ENCODE measurements at regions of chr1 and their contacts with region 1.

Region 1: GRCh38 chr1:155989242-155990004 is 11.1 kb upstream of the ARHGEF2 start:
- DNase-seq: peak; percentile 82
- ATAC-seq: peak; percentile 84
- H3K4me3 Mint-ChIP-seq: no peak overlapping the region
- H3K27ac Mint-ChIP-seq: no peak overlapping the region
- H3K4me1 Mint-ChIP-seq: peaks cover 27% of the 10 kb centered on the region
- H3K27me3 Mint-ChIP-seq: no peaks in the 10 kb centered on the region; the same call in 1 of the 2 replicates
- CTCF ChIP-seq: peak; percentile 99

Region 2: GRCh38 chr1:155717041-155717440 is 272.4 kb before region 1 on chr1:
- CTCF ChIA-PET with region 1: no interaction called
- POLR2A ChIA-PET with region 1: no interaction called
- DNase-seq: no peak
- ATAC-seq: no peak
- H3K4me3 Mint-ChIP-seq: no peak overlapping the region
- H3K27ac Mint-ChIP-seq: no peak overlapping the region
- H3K4me1 Mint-ChIP-seq: no peaks in the 10 kb centered on the region
- H3K27me3 Mint-ChIP-seq: no peaks in the 10 kb centered on the region; the same call in 1 of the 2 replicates
- CTCF ChIP-seq: no peak

Region 3: GRCh38 chr1:155934097-155934935 is 55.1 kb before region 1 on chr1 and contains the start of gene KHDC4:
- CTCF ChIA-PET with region 1: interaction called, 85 read pairs
- POLR2A ChIA-PET with region 1: interaction called, 4 read pairs
- DNase-seq: peak; percentile 88
- ATAC-seq: peak; percentile 92
- H3K4me3 Mint-ChIP-seq: no peak within 1 kb of the TSS
- H3K27ac Mint-ChIP-seq: no peak within 1 kb of the TSS
- H3K4me1 Mint-ChIP-seq: peaks cover 20% of the 10 kb centered on the region
- H3K27me3 Mint-ChIP-seq: no peaks in the 10 kb centered on the region
- CTCF ChIP-seq: no peak
- total RNA-seq, gene KHDC4: 46.0 to 64.4 TPM (median 59.8 TPM) in 3 replicates

Region 4: GRCh38 chr1:155940531-155940992 is 48.9 kb before region 1 on chr1:
- CTCF ChIA-PET with region 1: interaction called, 85 read pairs
- POLR2A ChIA-PET with region 1: interaction called, 4 read pairs
- DNase-seq: no peak
- ATAC-seq: peak; percentile 10; the same call in 1 of the 2 replicates
- H3K4me3 Mint-ChIP-seq: no peak overlapping the region
- H3K27ac Mint-ChIP-seq: peak overlapping the region; percentile 18; the same call in 1 of the 2 replicates
- H3K4me1 Mint-ChIP-seq: peaks cover 25% of the 10 kb centered on the region
- H3K27me3 Mint-ChIP-seq: no peaks in the 10 kb centered on the region
- CTCF ChIP-seq: no peak

Region 5: DNA sequence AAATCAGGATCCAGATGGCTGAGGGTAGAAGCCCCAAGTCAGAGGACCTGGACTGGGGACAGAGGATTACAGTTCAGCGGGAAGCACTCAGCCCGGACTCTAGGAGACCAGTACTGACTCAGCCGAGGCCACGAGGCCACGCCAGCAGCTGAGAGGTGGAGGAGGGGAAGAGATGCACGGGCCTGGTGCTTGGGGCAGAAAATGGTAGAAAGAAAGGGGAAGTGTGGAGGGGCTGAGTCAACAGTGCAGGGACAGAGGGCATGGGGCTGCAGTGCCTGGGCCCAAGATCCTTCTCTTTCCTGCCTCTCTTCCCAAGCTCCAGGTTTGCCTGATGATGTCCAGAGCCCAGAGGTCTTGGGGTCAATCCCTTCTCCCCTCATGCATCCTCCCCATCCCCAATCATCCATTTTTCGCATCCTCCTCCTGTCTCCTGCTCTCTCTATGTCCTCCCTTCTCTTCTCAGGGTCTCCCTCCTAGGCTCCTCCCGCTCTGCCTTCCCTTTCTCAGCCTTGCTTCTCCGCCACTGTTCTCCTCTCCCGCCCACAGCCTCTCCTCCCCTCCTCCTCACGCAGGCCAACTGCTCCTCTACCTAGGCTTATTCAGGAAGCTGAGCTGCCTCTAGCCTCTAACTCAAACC is 18.8 kb before region 1 on chr1:
- CTCF ChIA-PET with region 1: interaction called, 122 read pairs
- POLR2A ChIA-PET with region 1: interaction called, 31 read pairs
- DNase-seq: no peak
- ATAC-seq: peak; percentile 15
- H3K4me3 Mint-ChIP-seq: no peak overlapping the region
- H3K27ac Mint-ChIP-seq: peak overlapping the region; percentile 73
- H3K4me1 Mint-ChIP-seq: peaks cover 84% of the 10 kb centered on the region
- H3K27me3 Mint-ChIP-seq: no peaks in the 10 kb centered on the region
- CTCF ChIP-seq: no peak

Region 6: GRCh38 chr1:156001682-156002171 is 12.3 kb after region 1 on chr1:
- CTCF ChIA-PET with region 1: interaction called, 22 read pairs
- POLR2A ChIA-PET with region 1: interaction called, 4 read pairs
- DNase-seq: no peak
- ATAC-seq: no peak
- H3K4me3 Mint-ChIP-seq: no peak overlapping the region
- H3K27ac Mint-ChIP-seq: no peak overlapping the region
- H3K4me1 Mint-ChIP-seq: peaks cover 2% of the 10 kb centered on the region; the same call in 1 of the 2 replicates
- H3K27me3 Mint-ChIP-seq: peaks cover 2% of the 10 kb centered on the region; the same call in 1 of the 2 replicates
- CTCF ChIP-seq: no peak

Region 7: GRCh38 chr1:156012051-156012817 is 22.8 kb after region 1 on chr1:
- CTCF ChIA-PET with region 1: interaction called, 11 read pairs
- POLR2A ChIA-PET with region 1: interaction called, 6 read pairs
- DNase-seq: no peak
- ATAC-seq: no peak
- H3K4me3 Mint-ChIP-seq: no peak overlapping the region
- H3K27ac Mint-ChIP-seq: no peak overlapping the region
- H3K4me1 Mint-ChIP-seq: no peaks in the 10 kb centered on the region
- H3K27me3 Mint-ChIP-seq: no peaks in the 10 kb centered on the region
- CTCF ChIP-seq: no peak

Region 8: DNA sequence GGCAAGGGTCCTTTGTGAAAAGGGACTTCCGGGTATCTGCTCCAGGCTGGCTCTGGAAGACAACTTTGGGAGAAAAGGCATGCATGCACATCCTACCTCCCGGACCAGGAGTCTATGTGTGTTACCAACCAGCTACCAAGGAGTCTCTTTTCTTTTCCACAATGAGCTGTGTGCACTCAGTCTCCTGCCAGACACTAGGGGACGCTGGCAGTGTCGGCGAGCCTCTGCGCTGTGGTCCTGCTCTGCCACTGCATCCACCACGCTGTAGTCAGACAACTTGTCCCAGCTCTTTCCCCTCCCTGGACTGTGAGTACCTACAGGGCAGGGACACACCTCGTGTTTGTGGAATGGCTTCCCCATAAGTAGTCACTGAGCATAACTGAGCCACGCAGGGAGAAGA is 36.5 kb after region 1 on chr1:
- CTCF ChIA-PET with region 1: interaction called, 10 read pairs
- POLR2A ChIA-PET with region 1: no interaction called
- DNase-seq: peak; percentile 72
- ATAC-seq: peak; percentile 99
- H3K4me3 Mint-ChIP-seq: no peak overlapping the region
- H3K27ac Mint-ChIP-seq: no peak overlapping the region
- H3K4me1 Mint-ChIP-seq: peaks cover 5% of the 10 kb centered on the region
- H3K27me3 Mint-ChIP-seq: peaks cover 28% of the 10 kb centered on the region
- CTCF ChIP-seq: no peak